HepG2 (cell line): ENCODE measurements at regions of chr20 and their contacts with region 1.

Region 1: GRCh38 chr20:32357869-32358631 is at the start of gene ASXL1:
- DNase-seq: peak; percentile 99
- ATAC-seq: peak; percentile 92
- H3K4me3 ChIP-seq: peak within 1 kb of the TSS; percentile 79 to 95 (median 89)
- H3K27ac ChIP-seq: peak within 1 kb of the TSS; percentile 85
- H3K4me1 ChIP-seq: peaks cover 70% of the 10 kb centered on the region
- H3K27me3 ChIP-seq: no peaks in the 10 kb centered on the region; a peak in 1 of 5 replicates
- CTCF ChIP-seq: peak; percentile 56
- EP300 ChIP-seq: peak; percentile 66 to 82
- POLR2A ChIP-seq: peak; percentile 47 to 82
- RAD21 ChIP-seq: peak; percentile 49
- total RNA-seq, gene ASXL1: 47.3 and 62.1 TPM in 2 replicates

Region 2: DNA sequence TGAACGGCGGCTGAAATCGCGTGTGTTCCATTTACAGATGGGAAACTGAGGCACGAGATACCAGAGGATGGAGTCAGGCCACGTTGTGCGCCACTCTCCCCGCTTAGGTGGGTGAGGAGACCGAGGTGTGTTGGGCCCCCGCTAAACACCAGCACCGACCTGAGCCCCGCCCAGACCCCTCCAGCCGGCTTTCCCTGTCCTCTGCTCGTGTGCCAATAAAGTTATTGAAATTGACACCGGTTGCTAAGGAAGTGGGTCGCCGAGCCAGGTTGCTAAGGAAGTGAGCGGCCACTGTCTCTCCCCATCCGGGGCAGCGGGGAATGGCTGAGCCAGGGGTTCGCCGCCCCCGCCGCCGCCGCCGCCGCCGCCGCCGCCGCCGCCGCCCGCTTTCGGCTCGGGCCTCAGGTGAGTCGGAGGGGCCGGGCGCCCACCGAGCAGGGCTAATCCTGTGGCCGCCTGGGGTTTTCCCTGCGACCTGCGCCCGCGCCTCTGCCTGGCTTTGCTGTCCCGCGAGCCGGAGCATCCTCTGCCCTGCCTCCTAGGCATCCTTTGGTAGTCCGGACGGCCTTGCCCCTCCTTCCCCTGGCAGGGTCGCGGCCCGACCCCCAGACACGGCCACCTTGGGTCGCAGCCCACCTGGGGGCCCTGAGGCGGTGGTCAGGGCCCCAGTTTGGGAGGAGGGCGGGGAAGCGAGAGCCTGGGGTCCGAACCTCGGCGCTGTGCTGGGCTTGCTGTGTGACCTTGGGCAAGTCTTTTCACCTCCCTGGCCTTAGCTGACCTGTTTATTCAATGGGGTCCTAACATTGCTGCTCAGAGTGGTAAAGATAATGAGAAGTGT is 80.5 kb before region 1 on chr20 and contains the start of gene KIF3B:
- CTCF ChIA-PET with region 1: no interaction called
- POLR2A ChIA-PET with region 1: no interaction called
- in situ Hi-C with region 1: no loop called
- intact Hi-C with region 1: loop called (anchors 5 kb)
- DNase-seq: peak; percentile 94
- ATAC-seq: peak; percentile 95
- H3K4me3 ChIP-seq: peak within 1 kb of the TSS; percentile 99 to 100 (median 99)
- H3K27ac ChIP-seq: peak within 1 kb of the TSS; percentile 49
- H3K4me1 ChIP-seq: peaks cover 48% of the 10 kb centered on the region
- H3K27me3 ChIP-seq: no peaks in the 10 kb centered on the region; a peak in 1 of 5 replicates
- CTCF ChIP-seq: peak; percentile 9
- EP300 ChIP-seq: peak; percentile 68 to 84
- POLR2A ChIP-seq: peak in 1 of 2 experiments; percentile 66; a peak in 2 of 4 replicates
- RAD21 ChIP-seq: peak; percentile 52
- total RNA-seq, gene KIF3B: 28.8 and 36.4 TPM in 2 replicates

Region 3: DNA sequence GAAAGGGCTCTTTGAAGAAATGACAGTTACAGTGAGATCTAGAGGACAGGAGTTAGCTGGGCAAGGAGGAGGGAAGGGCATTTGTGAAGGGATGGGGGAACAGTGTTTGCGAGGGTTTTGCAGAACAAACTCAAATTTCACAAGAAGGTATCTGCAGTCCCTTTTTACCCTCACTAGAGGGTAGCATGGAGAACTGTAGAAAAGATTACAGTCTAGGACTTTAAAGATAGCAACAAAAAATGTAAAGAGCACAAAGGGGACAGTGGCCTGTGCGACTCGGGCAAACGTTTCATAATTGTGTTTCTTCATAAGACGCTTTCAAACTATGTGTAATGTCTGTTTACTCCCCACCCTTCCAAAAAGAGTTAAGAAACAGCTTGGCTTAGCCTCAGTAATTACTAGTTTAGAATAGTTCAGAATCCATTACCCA is 21.1 kb before region 1 on chr20:
- CTCF ChIA-PET with region 1: interaction called, 5 read pairs
- POLR2A ChIA-PET with region 1: interaction called, 36 read pairs
- in situ Hi-C with region 1: no loop called
- intact Hi-C with region 1: loop called (anchors 2 kb)
- DNase-seq: peak; percentile 86
- ATAC-seq: peak; percentile 80
- H3K4me3 ChIP-seq: no peak overlapping the region; a peak in 1 of 6 replicates
- H3K27ac ChIP-seq: no peak overlapping the region
- H3K4me1 ChIP-seq: peaks cover 47% of the 10 kb centered on the region
- H3K27me3 ChIP-seq: no peaks in the 10 kb centered on the region
- CTCF ChIP-seq: peak; percentile 87
- EP300 ChIP-seq: peak in 1 of 2 experiments; percentile 39; a peak in 2 of 4 replicates
- POLR2A ChIP-seq: no peak
- RAD21 ChIP-seq: peak; percentile 81

Region 4: GRCh38 chr20:32344835-32345506 is 13.1 kb before region 1 on chr20:
- CTCF ChIA-PET with region 1: no interaction called
- POLR2A ChIA-PET with region 1: interaction called, 36 read pairs
- in situ Hi-C with region 1: no loop called
- intact Hi-C with region 1: no loop called
- DNase-seq: no peak
- ATAC-seq: peak; percentile 77
- H3K4me3 ChIP-seq: peak overlapping the region in 1 of 3 experiments; percentile 10; a peak in 1 of 6 replicates
- H3K27ac ChIP-seq: peak overlapping the region; percentile 20
- H3K4me1 ChIP-seq: peaks cover 40% of the 10 kb centered on the region
- H3K27me3 ChIP-seq: no peaks in the 10 kb centered on the region
- CTCF ChIP-seq: no peak
- EP300 ChIP-seq: no peak
- POLR2A ChIP-seq: no peak
- RAD21 ChIP-seq: no peak

Region 5: DNA sequence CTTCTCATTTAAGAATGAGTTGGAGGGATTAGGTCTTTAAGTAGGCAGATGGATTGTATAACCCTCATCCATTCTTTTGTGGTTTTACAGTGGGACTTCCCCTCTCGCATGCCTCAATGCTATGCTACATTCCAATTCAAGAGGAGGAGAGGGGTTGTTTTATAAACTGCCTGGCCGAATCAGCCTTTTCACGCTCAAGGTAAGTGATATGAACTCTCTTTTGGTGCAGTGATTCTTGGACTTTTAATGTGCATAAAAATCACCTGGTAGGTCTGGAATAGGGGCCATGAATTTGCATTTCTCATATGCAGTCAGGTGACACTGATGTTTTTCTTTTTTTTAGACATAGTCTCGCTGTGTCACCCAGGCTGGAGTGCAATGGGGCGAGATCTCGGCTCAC is 10.9 kb after region 1 on chr20:
- CTCF ChIA-PET with region 1: no interaction called
- POLR2A ChIA-PET with region 1: interaction called, 31 read pairs
- in situ Hi-C with region 1: no loop called
- intact Hi-C with region 1: no loop called
- DNase-seq: no peak
- ATAC-seq: no peak
- H3K4me3 ChIP-seq: peak overlapping the region in 1 of 3 experiments; percentile 9; a peak in 1 of 6 replicates
- H3K27ac ChIP-seq: peak overlapping the region; percentile 50
- H3K4me1 ChIP-seq: peaks cover 65% of the 10 kb centered on the region
- H3K27me3 ChIP-seq: no peaks in the 10 kb centered on the region
- CTCF ChIP-seq: no peak
- EP300 ChIP-seq: no peak
- POLR2A ChIP-seq: no peak
- RAD21 ChIP-seq: no peak

Region 6: DNA sequence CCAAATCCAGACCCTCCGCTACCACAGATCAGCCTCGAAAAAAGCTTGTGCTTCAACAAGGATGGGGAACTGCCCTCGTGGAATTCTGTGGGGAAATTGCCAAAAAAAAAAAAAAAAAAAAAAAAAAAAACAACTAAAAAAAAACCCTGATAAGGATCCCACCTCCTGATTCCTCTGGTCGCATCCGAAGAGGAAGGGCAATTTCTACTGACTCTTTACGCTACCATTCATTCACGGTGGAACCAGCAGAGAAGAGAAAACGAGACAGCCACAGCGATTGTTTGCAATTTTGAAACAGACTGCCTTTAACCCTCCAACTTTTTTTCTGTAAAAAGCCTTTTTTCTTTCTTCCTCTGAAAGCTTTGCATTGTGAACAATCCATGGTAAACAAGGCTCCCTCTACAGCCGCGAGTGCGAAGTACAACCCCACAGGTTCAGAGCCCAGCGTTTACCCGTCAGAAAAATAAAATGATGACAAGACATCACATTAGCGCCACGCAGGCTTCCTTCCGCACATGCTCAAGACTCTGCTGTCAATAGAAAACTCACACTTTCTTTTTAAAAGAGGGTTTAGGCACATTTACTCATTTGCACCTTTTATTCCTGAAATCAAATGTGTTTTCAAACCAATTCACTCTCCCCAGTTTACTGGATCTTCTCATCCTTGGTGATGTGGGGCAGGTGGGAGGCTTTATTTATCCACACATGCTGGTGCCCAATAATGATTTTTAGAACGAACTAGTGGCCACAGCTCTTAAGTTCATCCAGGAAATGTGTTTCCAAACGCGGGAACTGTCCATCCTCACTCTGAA is 127.1 kb after region 1 on chr20:
- CTCF ChIA-PET with region 1: no interaction called
- POLR2A ChIA-PET with region 1: no interaction called
- in situ Hi-C with region 1: no loop called
- intact Hi-C with region 1: loop called (anchors 5 kb)
- DNase-seq: peak; percentile 87
- ATAC-seq: peak; percentile 52
- H3K4me3 ChIP-seq: peak overlapping the region; percentile 74 to 90 (median 83)
- H3K27ac ChIP-seq: peak overlapping the region; percentile 76
- H3K4me1 ChIP-seq: peaks cover 42% of the 10 kb centered on the region
- H3K27me3 ChIP-seq: no peaks in the 10 kb centered on the region
- CTCF ChIP-seq: peak; percentile 87
- EP300 ChIP-seq: peak in 1 of 2 experiments; percentile 54; a peak in 2 of 4 replicates
- POLR2A ChIP-seq: no peak
- RAD21 ChIP-seq: peak; percentile 73